ENCODE measurements at regions of chr5 and their contacts with region 1.

Region 1: GRCh38 chr5:56056875-56057274 is 62.1 kb upstream of the IL6ST start:
- DNase-seq: no peak
- ATAC-seq: no peak
- H3K4me3 ChIP-seq: no peak overlapping the region
- H3K4me3 Mint-ChIP-seq: no peak overlapping the region
- H3K27ac ChIP-seq: no peak overlapping the region
- H3K27ac Mint-ChIP-seq: peak overlapping the region; percentile 89
- H3K4me1 ChIP-seq: peaks cover 87% of the 10 kb centered on the region
- H3K4me1 Mint-ChIP-seq: peaks cover 75% of the 10 kb centered on the region
- H3K27me3 ChIP-seq: no peaks in the 10 kb centered on the region
- H3K27me3 Mint-ChIP-seq: no peaks in the 10 kb centered on the region
- CTCF ChIP-seq: no peak

Region 2: DNA sequence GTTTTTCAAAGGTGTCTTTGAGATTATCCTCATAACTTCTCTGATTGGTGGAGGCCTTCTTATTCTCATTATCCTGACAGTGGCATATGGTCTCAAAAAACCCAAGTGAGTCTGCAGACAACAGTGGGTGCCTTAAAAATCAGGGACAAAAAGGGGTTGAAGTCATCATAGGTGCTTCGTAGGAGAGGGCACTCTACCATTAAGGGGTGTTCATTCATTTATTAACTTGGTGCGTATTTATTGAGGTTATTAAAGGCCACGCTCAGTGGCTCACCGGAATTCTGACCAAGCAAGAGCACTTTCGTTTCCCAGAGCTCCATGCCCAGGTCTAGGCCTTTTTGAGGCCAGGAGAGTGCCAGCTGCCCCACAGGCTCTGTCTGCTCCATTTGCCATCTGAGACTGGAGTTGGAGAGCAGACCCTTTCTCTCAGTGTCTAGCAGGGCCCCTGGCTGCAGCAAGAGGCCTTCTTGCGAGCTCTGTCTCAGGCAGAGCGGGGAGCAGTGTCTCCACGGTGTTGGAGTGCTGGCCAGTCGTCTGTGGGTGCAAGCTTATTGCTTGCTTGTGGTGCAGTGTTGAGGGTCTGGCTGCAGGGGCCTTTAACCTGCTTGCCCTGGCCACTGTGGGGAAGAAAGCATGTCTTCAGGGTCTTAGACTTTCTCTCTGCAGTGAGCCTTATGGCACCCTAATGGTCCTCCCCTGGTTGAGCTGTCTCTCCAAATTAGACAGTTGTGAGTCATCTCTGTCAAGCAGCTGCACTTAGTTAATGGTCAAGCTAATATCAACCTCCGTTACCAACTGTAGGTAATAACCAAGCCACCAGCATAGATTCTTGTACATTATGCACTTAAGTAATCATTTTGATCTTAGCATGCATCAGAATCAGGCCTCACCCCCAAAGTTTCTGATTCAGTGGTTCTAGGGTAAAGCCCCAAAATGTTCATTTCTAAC is 143.1 kb before region 1 on chr5:
- CTCF ChIA-PET with region 1: no interaction called
- POLR2A ChIA-PET with region 1: no interaction called
- intact Hi-C with region 1: no loop called
- DNase-seq: peak in 1 of 9 experiments; percentile 32
- ATAC-seq: no peak
- H3K4me3 ChIP-seq: no peak overlapping the region
- H3K4me3 Mint-ChIP-seq: no peak overlapping the region
- H3K27ac ChIP-seq: no peak overlapping the region
- H3K27ac Mint-ChIP-seq: no peak overlapping the region
- H3K4me1 ChIP-seq: no peaks in the 10 kb centered on the region
- H3K4me1 Mint-ChIP-seq: no peaks in the 10 kb centered on the region
- H3K27me3 ChIP-seq: no peaks in the 10 kb centered on the region
- H3K27me3 Mint-ChIP-seq: no peaks in the 10 kb centered on the region
- CTCF ChIP-seq: no peak

Region 3: DNA sequence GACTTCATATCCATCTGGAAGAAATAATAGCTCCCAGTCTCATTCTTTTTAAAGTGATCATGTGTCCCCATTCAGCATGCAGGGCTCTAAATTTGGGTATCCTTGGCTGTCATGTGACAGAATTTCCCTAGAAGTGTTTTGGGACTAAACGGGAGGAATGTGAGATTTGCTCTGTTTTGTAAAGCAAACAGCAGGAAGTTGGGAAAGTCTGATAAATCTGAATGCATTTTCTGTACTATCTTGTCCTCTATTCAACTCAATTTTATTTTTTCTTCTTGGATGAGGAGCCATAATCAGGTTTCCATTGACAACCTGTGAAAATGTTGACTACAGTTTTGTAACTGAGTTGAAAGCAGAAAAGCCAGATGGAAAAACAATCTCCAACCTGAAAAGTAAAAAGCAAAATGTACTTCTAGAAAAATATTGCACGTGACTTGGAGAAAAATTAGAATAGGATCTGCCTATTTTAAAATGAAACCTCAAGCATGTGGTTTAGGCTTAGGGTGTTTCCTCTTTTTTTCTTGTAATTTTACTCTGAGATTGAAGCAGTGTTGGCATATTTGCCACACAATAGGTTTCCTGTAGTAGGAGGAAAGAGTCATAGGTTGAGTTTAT is 14.1 kb after region 1 on chr5:
- CTCF ChIA-PET with region 1: no interaction called
- POLR2A ChIA-PET with region 1: no interaction called
- intact Hi-C with region 1: loop called in 1 of 2 experiments (anchors 2 kb)
- DNase-seq: peak in 2 of 9 experiments; percentile 18 to 54
- ATAC-seq: peak; percentile 75
- H3K4me3 ChIP-seq: peak overlapping the region in 1 of 2 experiments; percentile 12
- H3K4me3 Mint-ChIP-seq: peak overlapping the region; percentile 56
- H3K27ac ChIP-seq: peak overlapping the region; percentile 45 to 49
- H3K27ac Mint-ChIP-seq: peak overlapping the region; percentile 87
- H3K4me1 ChIP-seq: peaks cover 54% of the 10 kb centered on the region
- H3K4me1 Mint-ChIP-seq: peaks cover 60% of the 10 kb centered on the region
- H3K27me3 ChIP-seq: no peaks in the 10 kb centered on the region
- H3K27me3 Mint-ChIP-seq: no peaks in the 10 kb centered on the region
- CTCF ChIP-seq: no peak

Region 4: DNA sequence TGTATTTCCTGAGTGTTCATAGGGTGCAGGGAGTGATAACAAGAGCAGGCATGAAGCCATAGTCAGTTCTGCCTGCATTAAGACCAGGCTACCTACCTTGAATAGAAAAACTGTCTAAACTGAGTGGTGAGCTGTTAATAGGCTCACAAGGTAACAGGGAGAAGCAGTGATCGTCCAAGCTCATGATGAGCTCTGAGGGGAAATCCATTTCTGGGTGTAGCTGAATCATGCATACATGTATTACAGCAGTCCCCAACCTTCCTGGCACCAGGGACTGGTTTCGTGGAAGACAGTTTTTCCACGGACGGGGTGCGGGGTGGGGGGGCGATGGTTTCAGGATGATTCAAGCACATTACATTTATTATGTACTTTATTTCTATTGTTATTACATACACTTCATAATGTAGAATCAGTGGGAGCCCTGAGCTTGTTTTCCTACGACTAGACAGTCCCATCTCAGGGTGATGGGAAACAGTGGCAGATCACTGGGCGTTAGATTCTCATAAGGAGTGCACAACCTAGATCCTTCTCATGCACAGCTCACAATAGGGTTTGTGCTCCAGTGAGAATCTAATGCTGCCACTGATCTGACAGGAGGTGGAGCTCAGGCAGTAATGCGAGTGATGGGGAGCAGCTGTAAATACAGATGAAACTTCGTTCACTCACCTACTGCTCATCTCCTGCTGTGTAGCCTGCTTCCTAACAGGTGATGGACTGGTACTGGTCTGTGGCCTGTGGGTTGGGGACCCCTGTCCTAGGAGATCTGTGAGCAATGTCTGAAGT is 37.9 kb after region 1 on chr5:
- CTCF ChIA-PET with region 1: no interaction called
- POLR2A ChIA-PET with region 1: no interaction called
- intact Hi-C with region 1: loop called in 1 of 2 experiments (anchors 5 kb)
- DNase-seq: peak in 1 of 9 experiments; percentile 33
- ATAC-seq: no peak
- H3K4me3 ChIP-seq: no peak overlapping the region
- H3K4me3 Mint-ChIP-seq: no peak overlapping the region
- H3K27ac ChIP-seq: no peak overlapping the region
- H3K27ac Mint-ChIP-seq: peak overlapping the region; percentile 42
- H3K4me1 ChIP-seq: peaks cover 89% of the 10 kb centered on the region
- H3K4me1 Mint-ChIP-seq: peaks cover 72% of the 10 kb centered on the region
- H3K27me3 ChIP-seq: no peaks in the 10 kb centered on the region
- H3K27me3 Mint-ChIP-seq: no peaks in the 10 kb centered on the region
- CTCF ChIP-seq: no peak

Region 5: GRCh38 chr5:56148453-56148971 is 91.6 kb after region 1 on chr5:
- CTCF ChIA-PET with region 1: interaction called, 3 read pairs
- POLR2A ChIA-PET with region 1: no interaction called
- intact Hi-C with region 1: loop called in 1 of 2 experiments (anchors 5 kb)
- DNase-seq: peak in 5 of 9 experiments; percentile 27 to 67 (median 36)
- ATAC-seq: peak; percentile 64
- H3K4me3 ChIP-seq: no peak overlapping the region
- H3K4me3 Mint-ChIP-seq: no peak overlapping the region
- H3K27ac ChIP-seq: peak overlapping the region in 1 of 2 experiments; percentile 29
- H3K27ac Mint-ChIP-seq: peak overlapping the region; percentile 76
- H3K4me1 ChIP-seq: peaks cover 49% of the 10 kb centered on the region
- H3K4me1 Mint-ChIP-seq: peaks cover 61% of the 10 kb centered on the region
- H3K27me3 ChIP-seq: no peaks in the 10 kb centered on the region
- H3K27me3 Mint-ChIP-seq: no peaks in the 10 kb centered on the region
- CTCF ChIP-seq: no peak

Region 6: DNA sequence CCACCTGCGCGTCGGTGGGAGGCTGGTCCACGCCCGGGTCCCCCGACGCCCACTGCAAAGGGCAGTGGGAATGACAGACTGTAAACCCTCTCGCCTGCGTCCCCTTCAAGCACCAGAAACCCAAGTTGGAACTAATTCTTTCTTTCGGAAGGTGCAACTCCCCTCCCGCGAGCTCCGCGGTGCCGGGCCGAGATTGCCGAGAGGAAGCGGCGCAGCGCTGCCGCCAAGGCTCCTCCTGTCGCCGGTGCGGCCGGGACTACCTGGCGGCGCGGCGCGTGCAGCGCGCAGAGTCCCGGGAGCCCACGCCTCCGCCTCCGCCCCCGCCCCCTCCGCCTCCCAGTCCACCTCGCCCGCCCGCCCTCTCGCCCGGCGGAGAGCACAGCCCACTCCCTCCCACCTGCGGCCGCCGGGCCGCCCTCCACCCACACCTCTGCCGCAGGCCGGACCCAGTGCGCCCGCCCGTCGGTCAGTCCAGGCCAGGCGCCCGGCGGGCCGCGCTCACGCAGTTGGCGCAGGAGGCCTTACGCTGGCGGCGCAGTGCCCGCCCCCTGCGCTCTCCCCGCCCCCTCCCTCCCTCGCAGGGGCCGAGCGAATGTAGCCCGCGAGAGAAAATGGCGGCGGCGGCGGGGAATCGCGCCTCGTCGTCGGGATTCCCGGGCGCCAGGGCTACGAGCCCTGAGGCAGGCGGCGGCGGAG is 758.2 kb after region 1 on chr5 and contains the start of gene MAP3K1:
- CTCF ChIA-PET with region 1: no interaction called
- POLR2A ChIA-PET with region 1: no interaction called
- intact Hi-C with region 1: no loop called
- DNase-seq: peak; percentile 62 to 92 (median 80)
- ATAC-seq: peak; percentile 71
- H3K4me3 ChIP-seq: peak within 1 kb of the TSS; percentile 61 to 93
- H3K4me3 Mint-ChIP-seq: peak within 1 kb of the TSS; percentile 90
- H3K27ac ChIP-seq: peak within 1 kb of the TSS; percentile 74 to 78
- H3K27ac Mint-ChIP-seq: peak within 1 kb of the TSS; percentile 93
- H3K4me1 ChIP-seq: peaks cover 24% of the 10 kb centered on the region
- H3K4me1 Mint-ChIP-seq: peaks cover 33% of the 10 kb centered on the region
- H3K27me3 ChIP-seq: no peaks in the 10 kb centered on the region
- H3K27me3 Mint-ChIP-seq: no peaks in the 10 kb centered on the region
- CTCF ChIP-seq: no peak
- total RNA-seq, gene MAP3K1: 19.1 TPM

Measured in CD8-positive, alpha-beta T cell (primary cell).